ENCODE measurements at regions of chr22 and their contacts with region 1.

Region 1: DNA sequence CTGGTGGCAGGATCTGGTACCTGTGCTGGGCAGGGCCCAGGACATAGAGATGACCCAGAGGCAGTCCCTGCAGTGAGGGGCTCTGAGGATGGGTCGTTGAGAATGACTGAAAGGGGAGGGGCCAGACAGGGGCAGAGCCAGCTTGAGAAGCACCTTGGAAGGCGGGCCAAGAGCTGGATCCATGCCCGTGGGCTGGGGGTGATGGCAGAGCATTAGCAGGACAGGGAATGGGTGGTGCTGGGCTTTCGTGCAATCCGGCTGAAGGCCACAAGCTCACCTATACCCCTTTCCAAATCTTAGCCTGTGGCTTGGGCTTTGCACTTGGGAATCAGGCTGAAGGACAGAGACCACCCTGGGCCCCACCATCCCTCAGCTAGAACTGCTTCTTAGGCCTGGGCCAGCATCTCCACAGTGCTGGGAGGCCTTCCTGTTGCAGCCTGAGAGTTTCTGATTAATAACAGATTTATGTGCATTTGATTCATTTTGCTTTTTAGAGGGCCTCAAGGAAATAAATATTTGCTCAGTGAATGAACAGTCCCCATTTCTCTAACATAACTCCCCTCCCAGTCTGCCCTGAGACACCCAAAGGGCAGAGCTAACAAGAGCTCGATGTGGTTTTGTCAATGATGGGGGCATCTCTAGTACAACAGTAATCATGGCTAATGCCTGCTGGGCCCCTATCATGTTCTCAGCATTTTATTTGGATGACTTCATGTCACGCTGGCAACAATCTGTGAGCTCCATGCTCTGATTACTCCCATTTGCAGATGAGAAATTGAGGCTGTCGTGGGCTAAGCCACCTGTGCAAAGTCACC is 39.3 kb downstream of the RIBC2 start:
- DNase-seq: no peak
- H3K4me3 ChIP-seq: no peak overlapping the region
- H3K27ac ChIP-seq: peak overlapping the region; percentile 64 to 69
- H3K4me1 ChIP-seq: peaks cover 11 to 25% of the 10 kb centered on the region in 2 donors
- H3K27me3 ChIP-seq: no peaks in the 10 kb centered on the region
- CTCF ChIP-seq: no peak

Region 2: DNA sequence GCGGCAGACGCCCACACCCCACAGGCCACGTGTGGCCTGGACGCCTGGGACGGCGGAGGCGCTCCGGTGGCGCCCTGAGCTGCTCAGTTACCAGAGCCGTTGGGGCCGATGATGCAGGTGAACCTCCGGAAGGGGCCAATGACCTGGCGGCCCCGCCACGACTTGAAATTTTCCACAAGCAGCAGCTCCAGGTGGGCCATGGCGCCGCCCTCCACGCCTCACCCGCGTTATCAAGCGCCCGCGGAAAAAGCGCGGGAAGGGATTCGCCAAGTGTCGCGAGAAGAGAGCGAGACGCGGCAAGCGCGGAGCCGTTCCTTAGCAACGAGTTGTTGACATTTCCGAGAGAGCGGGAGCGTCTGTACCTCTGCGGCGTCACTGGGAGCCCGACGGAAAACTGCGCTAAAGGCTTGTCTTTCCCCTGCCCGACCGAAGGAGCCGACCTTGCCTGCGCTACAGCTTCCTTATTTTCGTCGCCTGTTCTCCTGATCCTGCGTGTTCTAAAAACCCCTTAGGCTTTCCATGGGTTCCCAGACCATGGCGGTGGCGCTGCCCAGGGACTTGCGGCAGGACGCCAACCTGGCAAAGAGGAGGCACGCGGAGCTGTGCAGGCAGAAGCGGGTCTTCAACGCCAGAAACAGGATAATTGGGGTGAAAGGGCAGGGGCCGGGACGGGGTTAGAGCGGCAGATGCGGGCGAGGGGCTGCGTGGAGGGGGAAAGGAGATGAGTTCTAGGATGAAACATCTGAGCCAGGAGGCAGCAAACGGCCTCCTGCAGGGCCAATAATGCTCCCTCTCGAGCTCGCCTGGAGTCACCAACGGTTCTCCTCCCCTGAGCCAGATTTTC is 39.2 kb before region 1 on chr22 and contains the starts of genes RIBC2 and SMC1B:
- intact Hi-C with region 1: no loop called
- DNase-seq: peak in 1 of 2 donors; percentile 87
- H3K4me3 ChIP-seq: peak within 1 kb of the TSS; percentile 52 to 54
- H3K27ac ChIP-seq: peak within 1 kb of the TSS in 1 of 2 donors; percentile 5
- H3K4me1 ChIP-seq: peaks cover 0 to 7% of the 10 kb centered on the region in 2 donors
- H3K27me3 ChIP-seq: no peaks in the 10 kb centered on the region
- CTCF ChIP-seq: peak in 1 of 3 experiments; percentile 2
- total RNA-seq, gene RIBC2: not detected
- total RNA-seq, gene SMC1B: not detected

Region 3: DNA sequence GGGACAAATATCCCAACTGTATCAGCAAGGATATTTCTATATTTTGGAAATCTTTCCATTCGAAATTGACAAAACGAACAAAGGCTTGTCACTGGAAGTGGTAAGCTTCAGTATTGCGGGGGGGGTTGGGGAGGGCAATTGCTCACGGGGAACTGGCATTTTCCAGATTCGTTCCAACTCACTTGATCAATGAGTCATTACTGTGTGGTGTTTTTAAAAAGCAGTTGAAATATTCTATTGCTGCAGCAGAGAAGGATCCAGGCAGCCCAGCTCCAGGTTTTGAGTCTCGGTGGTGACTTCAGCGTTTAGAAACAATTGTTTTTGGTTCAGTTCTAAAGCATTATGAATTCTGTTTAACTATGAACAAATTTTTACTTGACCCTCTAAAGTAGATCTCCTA is 16.1 kb after region 1 on chr22:
- intact Hi-C with region 1: loop called (anchors 1 kb)
- DNase-seq: no peak
- H3K4me3 ChIP-seq: peak overlapping the region in 1 of 2 donors; percentile 13
- H3K27ac ChIP-seq: peak overlapping the region; percentile 83 to 90
- H3K4me1 ChIP-seq: peaks cover 14 to 35% of the 10 kb centered on the region in 2 donors
- H3K27me3 ChIP-seq: no peaks in the 10 kb centered on the region
- CTCF ChIP-seq: no peak

Region 4: GRCh38 chr22:45696227-45696626 is 243.5 kb after region 1 on chr22:
- intact Hi-C with region 1: no loop called
- DNase-seq: no peak
- H3K4me3 ChIP-seq: no peak overlapping the region
- H3K27ac ChIP-seq: no peak overlapping the region
- H3K4me1 ChIP-seq: no peaks in the 10 kb centered on the region
- H3K27me3 ChIP-seq: no peaks in the 10 kb centered on the region
- CTCF ChIP-seq: no peak

Measured in ascending aorta (tissue), 2 donors.